ENCODE measurements at regions of chr1 and their contacts with region 1.

Region 1: GRCh38 chr1:64469977-64470664 is at the start of gene CACHD1:
- DNase-seq: peak; percentile 84
- H3K4me3 ChIP-seq: peak within 1 kb of the TSS; percentile 56 to 89
- H3K27ac ChIP-seq: peak within 1 kb of the TSS; percentile 92 to 96
- H3K4me1 ChIP-seq: no peaks in the 10 kb centered on the region
- H3K27me3 ChIP-seq: no peaks in the 10 kb centered on the region
- CTCF ChIP-seq: peak; percentile 66 to 71 (median 70)
- POLR2A ChIP-seq: peak; percentile 40 to 50
- total RNA-seq, gene CACHD1: 19.2 to 39.9 (median 28.8) TPM

Region 2: GRCh38 chr1:64396817-64397216 is 73.3 kb before region 1 on chr1:
- intact Hi-C with region 1: no loop called
- DNase-seq: no peak
- H3K4me3 ChIP-seq: no peak overlapping the region
- H3K27ac ChIP-seq: no peak overlapping the region
- H3K4me1 ChIP-seq: no peaks in the 10 kb centered on the region
- H3K27me3 ChIP-seq: no peaks in the 10 kb centered on the region
- CTCF ChIP-seq: no peak
- POLR2A ChIP-seq: no peak

Region 3: GRCh38 chr1:64645741-64646140 is 175.6 kb after region 1 on chr1:
- intact Hi-C with region 1: loop called (anchors 10 kb)
- DNase-seq: no peak
- H3K4me3 ChIP-seq: no peak overlapping the region
- H3K27ac ChIP-seq: no peak overlapping the region
- H3K4me1 ChIP-seq: no peaks in the 10 kb centered on the region
- H3K27me3 ChIP-seq: no peaks in the 10 kb centered on the region
- CTCF ChIP-seq: no peak
- POLR2A ChIP-seq: no peak

Region 4: GRCh38 chr1:64675718-64676345 is 205.7 kb after region 1 on chr1:
- intact Hi-C with region 1: loop called (anchors 5 kb)
- DNase-seq: no peak
- H3K4me3 ChIP-seq: no peak overlapping the region
- H3K27ac ChIP-seq: no peak overlapping the region
- H3K4me1 ChIP-seq: no peaks in the 10 kb centered on the region
- H3K27me3 ChIP-seq: no peaks in the 10 kb centered on the region
- CTCF ChIP-seq: peak; percentile 43 to 70 (median 53)
- POLR2A ChIP-seq: no peak

Region 5: GRCh38 chr1:64691626-64692025 is 221.5 kb after region 1 on chr1:
- intact Hi-C with region 1: no loop called
- DNase-seq: no peak
- H3K4me3 ChIP-seq: no peak overlapping the region
- H3K27ac ChIP-seq: no peak overlapping the region
- H3K4me1 ChIP-seq: no peaks in the 10 kb centered on the region
- H3K27me3 ChIP-seq: no peaks in the 10 kb centered on the region
- CTCF ChIP-seq: no peak
- POLR2A ChIP-seq: no peak

Region 6: GRCh38 chr1:65002508-65003315 is 532.6 kb after region 1 on chr1:
- intact Hi-C with region 1: loop called (anchors 10 kb)
- DNase-seq: peak; percentile 96 to 97
- H3K4me3 ChIP-seq: peak overlapping the region; percentile 48 to 68
- H3K27ac ChIP-seq: peak overlapping the region; percentile 91 to 100
- H3K4me1 ChIP-seq: peaks cover 0 to 5% of the 10 kb centered on the region in 2 donors
- H3K27me3 ChIP-seq: no peaks in the 10 kb centered on the region
- CTCF ChIP-seq: no peak
- POLR2A ChIP-seq: peak; percentile 37 to 46

Region 7: DNA sequence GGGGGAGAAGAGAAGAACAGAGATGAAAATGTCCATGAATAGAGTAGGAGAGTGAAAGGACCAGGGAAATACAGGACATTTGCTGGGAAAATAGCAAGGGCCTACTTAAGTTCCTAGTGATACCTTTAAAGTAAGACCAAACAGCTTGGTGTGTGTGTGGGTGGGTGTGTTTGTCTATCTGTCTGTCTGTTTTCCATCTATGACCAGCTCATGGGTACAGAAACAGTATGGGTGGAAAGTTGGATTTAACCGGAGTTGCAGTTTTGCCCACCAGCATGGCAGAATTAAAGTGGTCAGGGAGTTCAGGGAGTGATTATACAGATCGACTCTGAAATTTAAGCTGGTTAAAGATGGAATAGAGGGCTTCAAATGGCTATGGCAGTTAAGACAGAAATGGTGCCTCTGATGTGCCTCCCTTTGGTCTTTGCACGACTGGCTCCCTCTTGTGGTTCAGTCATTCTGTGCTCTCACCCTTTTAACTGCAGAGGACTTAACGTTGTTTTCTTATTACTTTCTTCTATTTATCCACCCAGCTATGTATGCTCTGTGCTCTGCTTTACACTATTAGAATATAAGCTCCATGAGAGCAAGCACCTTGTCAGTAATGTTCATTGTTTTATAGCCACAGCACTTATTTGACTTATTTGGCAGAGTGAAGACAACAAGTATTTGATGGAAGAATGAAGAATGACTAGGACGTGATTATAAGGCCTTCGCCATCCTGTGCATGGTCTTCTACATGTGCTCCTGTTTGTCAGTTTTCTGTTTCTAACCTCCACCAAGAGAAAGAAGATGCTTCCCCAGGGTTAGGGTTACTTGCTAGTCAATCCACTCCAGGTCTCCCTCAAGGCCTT is 605.2 kb after region 1 on chr1:
- intact Hi-C with region 1: no loop called
- DNase-seq: peak; percentile 40 to 68
- H3K4me3 ChIP-seq: no peak overlapping the region
- H3K27ac ChIP-seq: no peak overlapping the region
- H3K4me1 ChIP-seq: no peaks in the 10 kb centered on the region
- H3K27me3 ChIP-seq: no peaks in the 10 kb centered on the region
- CTCF ChIP-seq: peak; percentile 56 to 69 (median 66)
- POLR2A ChIP-seq: no peak

Measured in uterus (tissue), 4 donors.